ENCODE measurements at regions of chr5 and their contacts with region 1.

Region 1: DNA sequence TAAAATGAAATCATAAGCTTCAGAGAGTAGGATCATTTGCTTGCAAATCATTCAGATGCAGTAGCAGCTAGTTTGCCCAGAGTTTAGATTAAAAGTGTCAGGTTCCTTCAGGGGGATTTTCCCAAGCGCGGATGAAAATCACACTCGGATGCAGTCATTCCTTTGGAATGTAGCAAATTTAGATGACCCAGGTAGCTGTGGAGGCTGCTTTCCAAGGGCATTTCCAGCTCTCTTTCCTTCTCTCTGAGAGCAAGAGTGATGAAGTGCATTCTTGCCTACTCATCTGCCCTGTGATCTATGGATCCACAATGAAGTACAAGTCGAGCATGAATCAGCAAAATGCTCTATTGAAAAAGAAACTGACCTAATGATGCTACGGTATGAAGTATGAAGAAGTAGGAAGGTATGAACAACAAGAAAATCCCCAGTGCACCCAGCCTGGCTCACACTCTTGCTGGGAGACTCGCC is 200.2 kb downstream of the PLK2 start:
- DNase-seq: no peak
- ATAC-seq: peak in 1 of 4 donors; percentile 40
- H3K4me3 ChIP-seq: peak overlapping the region in 2 of 12 donors; percentile 7
- H3K27ac ChIP-seq: peak overlapping the region in 3 of 12 donors; percentile 1 to 22 (median 8)
- H3K4me1 ChIP-seq: peaks cover 0 to 31% (median 15%) of the 10 kb centered on the region in 12 donors
- H3K27me3 ChIP-seq: no peaks in the 10 kb centered on the region
- CTCF ChIP-seq: no peak
- POLR2A ChIP-seq: no peak

Region 2: GRCh38 chr5:58231041-58231440 is 28.7 kb before region 1 on chr5:
- intact Hi-C with region 1: loop called in 1 of 10 experiments (anchors 2 kb)
- DNase-seq: no peak
- ATAC-seq: no peak
- H3K4me3 ChIP-seq: no peak overlapping the region
- H3K27ac ChIP-seq: no peak overlapping the region
- H3K4me1 ChIP-seq: peaks cover 0 to 29% (median 4%) of the 10 kb centered on the region in 12 donors
- H3K27me3 ChIP-seq: no peaks in the 10 kb centered on the region
- CTCF ChIP-seq: no peak
- POLR2A ChIP-seq: no peak

Region 3: GRCh38 chr5:58246461-58246944 is 13.2 kb before region 1 on chr5:
- intact Hi-C with region 1: loop called in 1 of 10 experiments (anchors 1 kb)
- DNase-seq: no peak
- ATAC-seq: peak in 3 of 4 donors; percentile 35 to 69 (median 40)
- H3K4me3 ChIP-seq: no peak overlapping the region
- H3K27ac ChIP-seq: peak overlapping the region in 9 of 12 donors; percentile 30 to 84 (median 56)
- H3K4me1 ChIP-seq: peaks cover 0 to 48% (median 10%) of the 10 kb centered on the region in 12 donors
- H3K27me3 ChIP-seq: no peaks in the 10 kb centered on the region
- CTCF ChIP-seq: no peak
- POLR2A ChIP-seq: no peak

Region 4: DNA sequence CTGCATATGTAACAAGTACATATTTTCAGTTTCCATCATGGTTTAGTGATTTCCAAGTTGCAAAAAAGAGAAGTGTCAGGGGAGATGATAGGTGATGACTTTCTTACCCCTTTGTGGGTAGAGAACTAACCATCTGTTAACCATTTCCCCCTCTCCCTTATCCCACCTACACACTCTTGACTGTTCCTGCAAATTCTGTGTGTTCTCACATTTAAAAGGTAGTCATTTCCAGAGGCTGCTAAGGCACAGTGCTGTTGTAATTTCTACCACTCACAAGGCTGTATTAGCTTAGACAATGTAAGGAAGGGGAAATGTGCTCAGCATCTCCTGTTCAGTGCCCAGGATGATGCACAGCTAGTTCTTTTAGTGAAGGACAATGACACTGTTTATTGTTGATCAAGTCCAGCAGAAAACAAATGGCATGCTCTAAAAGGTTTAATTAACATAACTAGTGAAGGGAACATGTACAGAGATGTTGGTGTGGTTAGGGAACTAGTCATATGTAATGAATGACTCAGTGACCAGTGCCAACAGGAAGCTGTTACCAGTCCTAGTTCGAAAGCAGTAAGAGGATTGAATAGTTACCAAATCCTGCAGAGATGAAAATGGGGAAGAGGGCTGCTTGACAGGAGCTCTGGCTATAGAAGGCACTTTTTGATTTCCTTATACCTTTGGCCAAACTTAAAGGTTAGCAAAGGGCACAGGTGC is 35.0 kb after region 1 on chr5:
- intact Hi-C with region 1: no loop called
- DNase-seq: no peak
- ATAC-seq: peak in 3 of 4 donors; percentile 52 to 94 (median 72)
- H3K4me3 ChIP-seq: no peak overlapping the region
- H3K27ac ChIP-seq: peak overlapping the region in 8 of 12 donors; percentile 5 to 30 (median 18)
- H3K4me1 ChIP-seq: peaks cover 0 to 6% (median 0%) of the 10 kb centered on the region in 12 donors
- H3K27me3 ChIP-seq: no peaks in the 10 kb centered on the region
- CTCF ChIP-seq: no peak
- POLR2A ChIP-seq: no peak

Region 5: GRCh38 chr5:58629271-58630159 is 369.8 kb after region 1 on chr5:
- intact Hi-C with region 1: no loop called
- DNase-seq: no peak
- ATAC-seq: no peak
- H3K4me3 ChIP-seq: no peak overlapping the region
- H3K27ac ChIP-seq: peak overlapping the region in 2 of 12 donors; percentile 18 to 27
- H3K4me1 ChIP-seq: peaks cover 0 to 5% (median 0%) of the 10 kb centered on the region in 12 donors
- H3K27me3 ChIP-seq: no peaks in the 10 kb centered on the region
- CTCF ChIP-seq: no peak
- POLR2A ChIP-seq: no peak